ENCODE measurements at regions of chr13 and their contacts with region 1.

Region 1: DNA sequence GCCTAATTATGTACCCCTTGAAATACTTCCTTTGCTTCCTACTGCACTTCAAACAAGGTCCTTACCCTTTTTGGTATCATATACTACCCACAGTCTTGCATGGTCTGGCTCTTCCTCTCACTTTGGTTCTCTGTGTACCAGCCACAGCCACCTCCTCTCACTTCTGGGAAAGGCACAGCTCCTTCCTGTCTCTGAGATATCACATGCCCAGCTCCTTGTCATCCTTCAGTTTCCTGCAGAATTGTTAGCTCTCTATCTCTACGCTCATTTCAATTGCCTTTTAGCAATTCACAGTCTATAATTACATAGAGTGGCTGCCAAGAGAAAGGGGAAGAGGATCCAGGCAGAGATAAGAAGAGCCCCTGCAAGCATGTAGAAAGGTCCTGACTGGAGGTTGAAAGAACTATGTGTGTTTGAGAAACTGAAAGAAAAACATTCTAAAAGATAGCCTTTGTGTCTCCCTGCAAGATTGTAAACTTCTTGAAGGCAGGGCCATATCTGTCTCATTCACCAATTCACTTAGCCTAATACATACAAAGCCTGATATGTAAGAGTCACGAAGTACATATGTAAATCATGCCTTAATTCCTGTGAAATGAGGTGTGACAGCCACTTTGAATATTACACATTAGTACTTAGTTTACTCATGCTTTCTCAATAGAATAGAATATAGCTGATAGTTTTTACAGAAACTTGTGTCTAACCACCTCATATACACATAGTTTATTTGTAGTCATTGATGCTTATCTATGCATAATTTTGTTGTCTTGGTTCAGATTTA is 933.1 kb downstream of the DIAPH3 start:
- DNase-seq: no peak
- H3K4me3 ChIP-seq: no peak overlapping the region
- H3K27ac ChIP-seq: no peak overlapping the region
- H3K4me1 ChIP-seq: no peaks in the 10 kb centered on the region
- H3K27me3 ChIP-seq: no peaks in the 10 kb centered on the region
- CTCF ChIP-seq: no peak
- EP300 ChIP-seq: no peak
- POLR2A ChIP-seq: no peak

Region 2: DNA sequence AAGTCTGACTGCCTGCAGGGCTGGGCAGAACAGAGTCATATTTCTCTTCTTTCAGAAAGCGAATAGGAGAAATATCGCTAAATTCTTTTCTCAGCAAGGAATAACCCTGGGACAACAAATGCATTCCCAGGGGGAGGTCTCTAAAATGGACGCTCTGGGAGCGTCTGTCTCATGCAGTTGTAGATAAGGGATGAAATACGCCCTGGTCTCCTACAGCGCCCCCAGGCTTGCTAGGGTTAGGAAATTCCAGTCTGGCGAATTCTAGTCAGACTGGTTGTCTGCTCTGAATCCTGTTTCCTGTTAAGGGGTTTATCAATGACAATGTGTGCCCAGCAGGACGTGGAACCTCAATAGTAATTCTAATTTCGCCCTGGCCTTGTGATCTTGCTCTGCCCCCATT is 281.0 kb before region 1 on chr13:
- in situ Hi-C with region 1: no loop called
- intact Hi-C with region 1: no loop called
- DNase-seq: no peak
- H3K4me3 ChIP-seq: no peak overlapping the region
- H3K27ac ChIP-seq: no peak overlapping the region
- H3K4me1 ChIP-seq: no peaks in the 10 kb centered on the region
- H3K27me3 ChIP-seq: no peaks in the 10 kb centered on the region
- CTCF ChIP-seq: no peak
- EP300 ChIP-seq: no peak
- POLR2A ChIP-seq: no peak

Region 3: DNA sequence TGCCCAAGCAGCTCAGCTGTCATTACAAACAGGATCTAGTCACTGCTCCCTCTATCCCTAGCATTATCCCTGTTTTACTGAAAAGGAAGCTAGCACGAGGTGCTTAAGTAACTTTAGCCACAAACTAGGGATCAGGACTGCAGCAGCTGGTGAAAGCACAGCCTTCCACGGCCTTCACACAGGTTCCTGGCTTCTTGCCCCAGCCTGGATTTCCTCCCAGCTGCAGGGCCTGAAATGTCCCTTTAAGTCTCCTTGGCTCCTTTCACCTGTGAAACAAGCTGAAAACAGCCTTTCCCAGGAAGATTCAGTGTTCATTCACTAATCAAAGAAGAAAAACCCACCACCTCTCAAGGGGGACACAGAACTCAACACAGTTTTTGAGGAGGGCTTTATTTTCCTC is 178.5 kb after region 1 on chr13:
- in situ Hi-C with region 1: no loop called
- intact Hi-C with region 1: loop called (anchors 5 kb)
- DNase-seq: peak; percentile 13
- H3K4me3 ChIP-seq: no peak overlapping the region
- H3K27ac ChIP-seq: no peak overlapping the region
- H3K4me1 ChIP-seq: no peaks in the 10 kb centered on the region
- H3K27me3 ChIP-seq: no peaks in the 10 kb centered on the region
- CTCF ChIP-seq: no peak
- EP300 ChIP-seq: no peak
- POLR2A ChIP-seq: no peak

Region 4: DNA sequence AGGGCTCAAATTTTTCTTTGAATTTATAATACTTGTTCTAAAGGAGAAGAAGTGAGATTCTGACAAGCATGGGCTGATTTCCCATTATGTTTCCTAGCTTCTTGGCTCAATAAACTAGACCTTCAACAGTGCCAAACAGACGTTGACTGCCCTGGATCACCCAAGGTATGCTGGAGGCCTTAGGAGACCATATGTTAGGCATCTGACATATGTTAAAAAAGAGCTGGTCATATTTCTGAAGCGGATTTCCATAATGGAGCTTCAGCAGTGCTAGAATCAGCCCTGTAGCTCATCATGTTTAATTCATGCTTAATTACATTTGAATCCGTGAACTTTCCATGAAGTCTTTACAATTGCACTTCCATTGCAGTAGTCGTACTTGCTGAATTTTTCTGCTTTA is 279.7 kb after region 1 on chr13:
- in situ Hi-C with region 1: no loop called
- intact Hi-C with region 1: no loop called
- DNase-seq: no peak
- H3K4me3 ChIP-seq: no peak overlapping the region
- H3K27ac ChIP-seq: no peak overlapping the region
- H3K4me1 ChIP-seq: no peaks in the 10 kb centered on the region
- H3K27me3 ChIP-seq: no peaks in the 10 kb centered on the region
- CTCF ChIP-seq: no peak
- EP300 ChIP-seq: no peak
- POLR2A ChIP-seq: no peak

Measured in transverse colon (tissue), 4 donors.